Activated B cell treated with CpG ODN at 0.5 μM for 24 hours (primary cell): ENCODE measurements at regions of chr2 and their contacts with region 1.

Region 1: DNA sequence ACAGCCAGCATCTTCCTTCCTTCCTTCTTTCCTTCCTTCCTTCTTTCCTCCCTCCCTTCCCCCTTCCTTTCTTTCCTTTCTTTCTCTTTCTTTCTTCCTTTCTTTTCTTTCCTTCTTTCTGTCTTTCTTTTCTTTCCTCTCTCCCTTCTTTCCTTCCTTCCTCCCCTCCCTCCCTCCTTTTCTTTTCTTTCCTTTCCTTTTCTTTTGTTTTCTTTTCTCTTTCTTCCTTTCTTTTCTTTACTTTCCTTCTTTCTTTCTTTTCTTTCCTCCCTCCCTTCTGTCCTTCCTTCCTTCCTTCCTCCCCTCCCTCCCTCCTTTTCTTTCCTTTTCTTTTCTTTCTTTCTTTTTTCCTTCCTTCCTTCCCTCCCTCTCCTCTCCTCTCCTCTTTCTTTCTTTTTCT is 296.0 kb upstream of the LRRTM4 start:
- DNase-seq: no peak
- ATAC-seq: no peak
- H3K4me3 Mint-ChIP-seq: no peak overlapping the region
- H3K27ac Mint-ChIP-seq: no peak overlapping the region
- H3K4me1 Mint-ChIP-seq: no peaks in the 10 kb centered on the region
- H3K27me3 Mint-ChIP-seq: no peaks in the 10 kb centered on the region
- CTCF ChIP-seq: no peak

Region 2: GRCh38 chr2:77328125-77328524 is 490.1 kb before region 1 on chr2:
- CTCF ChIA-PET with region 1: no interaction called
- POLR2A ChIA-PET with region 1: interaction called, 13 read pairs
- intact Hi-C with region 1: no loop called
- DNase-seq: no peak
- ATAC-seq: no peak
- H3K4me3 Mint-ChIP-seq: no peak overlapping the region
- H3K27ac Mint-ChIP-seq: no peak overlapping the region
- H3K4me1 Mint-ChIP-seq: no peaks in the 10 kb centered on the region
- H3K27me3 Mint-ChIP-seq: no peaks in the 10 kb centered on the region
- CTCF ChIP-seq: no peak